BJ (cell line): ENCODE measurements at regions of chr1 and their contacts with region 1.

Region 1: DNA sequence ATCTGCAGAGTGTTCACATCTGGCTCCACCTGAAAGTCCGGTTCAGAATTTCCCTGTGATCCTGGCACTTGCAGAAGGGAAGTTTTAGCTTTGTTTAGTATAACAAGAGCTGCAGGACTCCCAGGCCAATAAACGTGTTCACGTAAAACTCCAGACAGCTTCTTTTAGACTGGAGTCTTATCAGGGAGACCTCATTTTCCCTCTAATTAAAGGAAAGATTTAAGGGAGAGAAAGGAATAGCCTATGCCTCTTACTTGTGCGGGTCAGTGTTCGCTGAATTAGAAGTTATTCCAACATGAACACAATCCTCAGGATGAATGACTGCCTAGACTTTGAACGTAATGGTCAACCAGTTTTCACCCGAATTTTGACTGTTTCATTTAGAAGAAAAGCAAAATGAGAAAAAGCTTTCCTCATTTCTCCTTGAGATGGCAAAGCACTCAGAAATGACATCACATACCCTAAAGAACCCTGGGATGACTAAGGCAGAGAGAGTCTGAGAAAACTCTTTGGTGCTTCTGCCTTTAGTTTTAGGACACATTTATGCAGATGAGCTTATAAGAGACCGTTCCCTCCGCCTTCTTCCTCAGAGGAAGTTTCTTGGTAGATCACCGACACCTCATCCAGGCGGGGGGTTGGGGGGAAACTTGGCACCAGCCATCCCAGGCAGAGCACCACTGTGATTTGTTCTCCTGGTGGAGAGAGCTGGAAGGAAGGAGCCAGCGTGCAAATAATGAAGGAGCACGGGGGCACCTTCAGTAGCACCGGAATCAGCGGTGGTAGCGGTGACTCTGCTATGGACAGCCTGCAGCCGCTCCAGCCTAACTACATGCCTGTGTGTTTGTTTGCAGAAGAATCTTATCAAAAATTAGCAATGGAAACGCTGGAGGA is 202.1 kb upstream of the SGIP1 start:
- DNase-seq: no peak
- H3K4me3 ChIP-seq: peak overlapping the region; percentile 60
- H3K27me3 ChIP-seq: no peaks in the 10 kb centered on the region
- CTCF ChIP-seq: peak; percentile 50

Region 2: GRCh38 chr1:66271216-66271903 is 60.5 kb before region 1 on chr1:
- CTCF ChIA-PET with region 1: interaction called, 5 read pairs
- POLR2A ChIA-PET with region 1: interaction called, 14 read pairs
- DNase-seq: peak; percentile 98
- H3K4me3 ChIP-seq: no peak overlapping the region
- H3K27me3 ChIP-seq: no peaks in the 10 kb centered on the region
- CTCF ChIP-seq: no peak

Region 3: DNA sequence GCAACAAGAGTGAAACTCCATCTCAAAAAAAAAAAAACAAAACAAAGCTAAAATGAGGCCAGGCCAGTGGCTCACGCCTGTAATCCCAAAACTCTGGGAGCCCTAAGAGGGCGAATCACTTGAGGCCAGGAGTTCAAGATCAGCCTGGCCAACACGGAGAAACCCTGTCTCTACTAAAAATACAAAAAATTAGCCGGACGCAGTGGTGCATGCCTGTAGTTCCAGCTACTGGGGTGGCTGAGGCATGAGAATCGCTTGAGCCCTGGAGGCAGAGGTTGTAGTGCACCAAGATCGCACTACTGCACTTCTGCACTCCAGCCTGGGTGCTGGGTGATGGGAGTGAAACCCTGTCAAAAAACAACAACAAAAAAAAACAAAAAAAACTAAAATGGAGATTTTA is 10.8 kb after region 1 on chr1:
- CTCF ChIA-PET with region 1: interaction called, 8 read pairs
- POLR2A ChIA-PET with region 1: interaction called, 10 read pairs
- DNase-seq: no peak
- H3K4me3 ChIP-seq: no peak overlapping the region
- H3K27me3 ChIP-seq: no peaks in the 10 kb centered on the region
- CTCF ChIP-seq: no peak